PC-9 (cell line): ENCODE measurements at regions of chr3 and their contacts with region 1.

Region 1: DNA sequence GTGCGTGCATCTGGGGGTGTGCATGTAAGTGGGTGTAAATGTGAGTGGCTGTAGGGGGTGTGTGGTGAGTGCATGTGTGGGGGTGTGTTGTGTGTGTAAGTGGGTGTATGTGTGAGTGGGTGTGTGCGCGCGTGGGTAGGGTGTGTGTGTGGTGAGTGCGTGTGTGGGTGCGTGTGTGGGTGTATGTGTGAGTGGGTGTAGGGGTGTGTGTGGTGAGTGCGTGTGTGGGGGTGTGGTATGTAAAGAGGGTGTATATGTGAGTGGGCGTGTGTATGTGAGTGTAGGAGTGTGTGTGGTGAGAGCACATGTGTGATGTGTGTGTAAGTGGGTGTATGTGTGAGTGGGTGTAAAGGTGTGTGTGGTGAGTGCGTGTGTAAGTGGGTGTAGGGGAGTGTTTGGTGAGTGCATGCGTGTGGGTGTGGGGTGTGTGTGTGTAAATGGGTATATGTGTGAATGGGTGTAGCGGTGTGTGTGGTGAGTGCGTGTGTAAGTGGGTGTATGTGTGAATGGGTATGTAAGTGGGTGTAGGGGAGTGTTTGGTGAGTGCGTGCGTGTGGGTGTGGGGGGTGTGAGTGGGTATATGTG is 916 bp upstream of the CPN2 start:
- DNase-seq: no peak
- H3K4me3 ChIP-seq: no peak overlapping the region
- H3K27ac ChIP-seq: no peak overlapping the region
- H3K4me1 ChIP-seq: no peaks in the 10 kb centered on the region
- H3K27me3 ChIP-seq: peaks cover 18% of the 10 kb centered on the region
- CTCF ChIP-seq: no peak

Region 2: GRCh38 chr3:194395212-194395611 is 43.2 kb after region 1 on chr3:
- CTCF ChIA-PET with region 1: no interaction called
- POLR2A ChIA-PET with region 1: interaction called, 18 read pairs
- intact Hi-C with region 1: no loop called
- DNase-seq: no peak
- H3K4me3 ChIP-seq: no peak overlapping the region
- H3K27ac ChIP-seq: no peak overlapping the region
- H3K4me1 ChIP-seq: no peaks in the 10 kb centered on the region
- H3K27me3 ChIP-seq: peaks cover 13% of the 10 kb centered on the region; the same call in 1 of the 2 replicates
- CTCF ChIP-seq: no peak

Region 3: GRCh38 chr3:194910414-194910984 is 558.5 kb after region 1 on chr3:
- CTCF ChIA-PET with region 1: no interaction called
- POLR2A ChIA-PET with region 1: no interaction called
- intact Hi-C with region 1: no loop called
- DNase-seq: no peak
- H3K4me3 ChIP-seq: no peak overlapping the region
- H3K27ac ChIP-seq: no peak overlapping the region
- H3K4me1 ChIP-seq: peaks cover 14% of the 10 kb centered on the region
- H3K27me3 ChIP-seq: peaks cover 4% of the 10 kb centered on the region; the same call in 1 of the 2 replicates
- CTCF ChIP-seq: no peak